Activated naive CD4-positive, alpha-beta T cell treated with anti-CD3 and anti-CD28 coated beads for 36 hours (primary cell): ENCODE measurements at regions of chr1 and their contacts with region 1.

Region 1: GRCh38 chr1:116737020-116737854 is 17.0 kb upstream of the CD2 start:
- DNase-seq: peak; percentile 84
- H3K4me3 Mint-ChIP-seq: peak overlapping the region; percentile 71
- H3K27ac Mint-ChIP-seq: peak overlapping the region; percentile 100
- H3K4me1 Mint-ChIP-seq: peaks cover 61% of the 10 kb centered on the region
- H3K27me3 Mint-ChIP-seq: no peaks in the 10 kb centered on the region

Region 2: GRCh38 chr1:116724765-116725375 is 12.4 kb before region 1 on chr1:
- CTCF ChIA-PET with region 1: interaction called, 33 read pairs
- intact Hi-C with region 1: no loop called
- DNase-seq: peak; percentile 94
- H3K4me3 Mint-ChIP-seq: no peak overlapping the region
- H3K27ac Mint-ChIP-seq: no peak overlapping the region
- H3K4me1 Mint-ChIP-seq: peaks cover 26% of the 10 kb centered on the region
- H3K27me3 Mint-ChIP-seq: no peaks in the 10 kb centered on the region

Region 3: GRCh38 chr1:116769561-116769977 is 32.3 kb after region 1 on chr1:
- CTCF ChIA-PET with region 1: interaction called, 96 read pairs
- intact Hi-C with region 1: loop called (anchors 1 kb)
- DNase-seq: peak; percentile 88
- H3K4me3 Mint-ChIP-seq: peak overlapping the region; percentile 100
- H3K27ac Mint-ChIP-seq: peak overlapping the region; percentile 100
- H3K4me1 Mint-ChIP-seq: peaks cover 90% of the 10 kb centered on the region
- H3K27me3 Mint-ChIP-seq: no peaks in the 10 kb centered on the region

Region 4: GRCh38 chr1:116826818-116827606 is 89.8 kb after region 1 on chr1:
- CTCF ChIA-PET with region 1: interaction called, 19 read pairs
- intact Hi-C with region 1: loop called (anchors 1 kb)
- DNase-seq: peak; percentile 92
- H3K4me3 Mint-ChIP-seq: peak overlapping the region; percentile 83
- H3K27ac Mint-ChIP-seq: peak overlapping the region; percentile 97
- H3K4me1 Mint-ChIP-seq: peaks cover 74% of the 10 kb centered on the region
- H3K27me3 Mint-ChIP-seq: no peaks in the 10 kb centered on the region

Region 5: DNA sequence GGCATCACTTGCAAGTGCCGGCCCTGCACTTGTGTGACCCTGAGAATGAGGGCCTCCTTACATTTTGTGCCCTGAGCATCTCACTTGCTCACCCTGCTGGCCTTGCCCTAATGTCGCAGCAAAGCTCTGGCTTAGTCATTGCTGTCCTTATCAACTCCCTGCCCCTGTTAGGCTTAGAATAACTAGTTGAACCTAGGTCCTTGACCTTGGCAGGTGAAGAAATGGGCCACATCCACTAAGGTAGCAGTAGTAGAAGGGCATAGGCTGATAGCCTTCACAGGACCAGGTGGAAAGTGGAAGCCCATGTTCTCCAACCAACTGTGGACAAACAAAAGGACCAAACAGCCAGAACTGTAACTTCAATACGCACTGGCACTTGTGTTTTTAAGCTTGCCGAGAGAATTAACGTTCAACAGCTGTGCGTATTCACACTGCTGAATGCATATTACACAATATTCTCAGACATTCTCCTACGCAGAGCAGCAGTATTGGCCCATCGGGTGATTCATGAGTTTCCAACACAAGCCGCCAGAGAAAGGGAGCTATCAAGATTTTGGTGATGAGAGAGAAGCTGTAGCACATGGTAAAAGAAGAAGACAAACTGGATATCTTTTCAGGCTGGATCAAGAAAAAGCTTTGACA is 144.8 kb after region 1 on chr1:
- CTCF ChIA-PET with region 1: interaction called, 8 read pairs
- intact Hi-C with region 1: loop called (anchors 1 kb)
- DNase-seq: peak; percentile 77
- H3K4me3 Mint-ChIP-seq: no peak overlapping the region
- H3K27ac Mint-ChIP-seq: no peak overlapping the region
- H3K4me1 Mint-ChIP-seq: peaks cover 12% of the 10 kb centered on the region
- H3K27me3 Mint-ChIP-seq: no peaks in the 10 kb centered on the region

Region 6: DNA sequence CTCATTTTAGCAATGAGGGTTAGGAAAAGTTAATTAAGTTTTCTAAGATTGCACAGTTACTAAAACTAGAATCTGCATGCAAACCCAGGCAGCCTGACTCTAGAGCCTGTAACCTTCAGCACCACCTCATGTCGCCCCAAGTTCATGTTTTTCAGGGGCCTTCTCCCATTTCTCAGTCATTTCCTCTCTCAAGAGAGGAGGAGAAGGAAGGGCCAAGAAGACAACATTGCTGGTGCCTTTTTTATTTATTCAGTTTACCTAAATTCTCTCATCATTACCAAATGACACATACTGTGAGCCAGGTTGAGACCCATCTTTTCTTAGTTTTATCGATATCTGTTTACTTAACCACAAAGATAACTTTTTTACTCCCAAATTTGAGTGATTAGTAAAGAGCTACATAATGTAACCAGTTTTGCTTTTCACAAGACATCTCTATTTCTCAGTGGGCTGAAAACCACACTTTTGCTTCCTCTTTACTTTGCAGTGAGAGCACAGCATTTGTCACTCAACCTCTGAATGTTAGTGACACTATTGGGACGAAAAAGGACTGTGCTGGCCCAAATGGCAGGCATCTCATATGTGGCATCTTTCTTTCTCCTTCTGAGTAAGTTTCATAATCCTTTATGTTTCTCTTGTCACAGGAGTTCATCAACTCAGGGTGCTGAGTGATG is 264.2 kb after region 1 on chr1 and contains the start of gene CD101:
- CTCF ChIA-PET with region 1: interaction called, 4 read pairs
- intact Hi-C with region 1: loop called (anchors 1 kb)
- DNase-seq: peak; percentile 72
- H3K4me3 Mint-ChIP-seq: peak within 1 kb of the TSS; percentile 8
- H3K27ac Mint-ChIP-seq: peak within 1 kb of the TSS; percentile 82
- H3K4me1 Mint-ChIP-seq: peaks cover 59% of the 10 kb centered on the region
- H3K27me3 Mint-ChIP-seq: no peaks in the 10 kb centered on the region
- total RNA-seq, gene CD101: 0.83 to 1.1 TPM

Region 7: DNA sequence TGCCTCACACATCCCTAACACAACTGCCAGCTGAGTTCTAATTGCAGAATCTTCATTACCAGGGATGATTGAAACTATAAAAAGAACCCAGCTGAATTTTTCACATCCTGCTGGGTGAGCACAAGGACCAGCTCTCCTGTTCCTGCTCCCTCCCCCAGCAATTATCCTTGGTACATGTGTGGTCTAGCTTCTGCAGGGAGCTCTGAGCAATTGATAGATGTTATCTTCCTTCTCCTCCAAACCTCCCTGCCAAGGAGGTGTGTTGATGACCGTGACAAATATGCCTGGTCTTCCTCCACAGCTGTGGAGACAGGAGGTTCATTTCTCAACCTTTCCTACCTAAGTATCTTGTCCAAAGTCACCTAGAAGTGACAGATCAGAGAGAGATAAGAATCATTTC is 564.7 kb after region 1 on chr1:
- CTCF ChIA-PET with region 1: no interaction called
- intact Hi-C with region 1: no loop called
- DNase-seq: no peak
- H3K4me3 Mint-ChIP-seq: no peak overlapping the region
- H3K27ac Mint-ChIP-seq: no peak overlapping the region
- H3K4me1 Mint-ChIP-seq: no peaks in the 10 kb centered on the region
- H3K27me3 Mint-ChIP-seq: peaks cover 2% of the 10 kb centered on the region

Region 8: DNA sequence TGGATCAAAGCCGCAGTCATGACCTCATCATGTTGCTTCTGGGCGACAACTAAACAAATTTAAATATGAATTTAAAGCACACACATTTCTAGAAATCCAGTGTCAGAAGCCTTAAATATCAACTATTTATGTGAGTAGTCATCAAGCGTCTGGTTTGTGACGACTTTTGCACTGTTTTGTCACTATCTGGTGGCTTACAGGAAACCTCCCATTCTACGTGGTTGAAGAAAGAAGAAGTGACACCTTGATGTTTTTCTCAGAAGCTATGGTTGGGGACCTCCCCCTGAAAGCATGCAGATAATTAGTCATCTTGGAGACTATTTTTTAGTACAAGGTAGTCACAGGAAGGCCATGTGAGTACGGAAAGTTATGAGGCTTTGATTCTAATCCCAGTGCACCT is 927.1 kb after region 1 on chr1:
- CTCF ChIA-PET with region 1: no interaction called
- intact Hi-C with region 1: loop called (anchors 2 kb)
- DNase-seq: peak; percentile 89
- H3K4me3 Mint-ChIP-seq: no peak overlapping the region
- H3K27ac Mint-ChIP-seq: peak overlapping the region; percentile 71
- H3K4me1 Mint-ChIP-seq: peaks cover 71% of the 10 kb centered on the region
- H3K27me3 Mint-ChIP-seq: peaks cover 6% of the 10 kb centered on the region